Posterior cingulate gyrus (tissue), 11 donors: ENCODE measurements at regions of chr10 and their contacts with region 1.

Region 1: DNA sequence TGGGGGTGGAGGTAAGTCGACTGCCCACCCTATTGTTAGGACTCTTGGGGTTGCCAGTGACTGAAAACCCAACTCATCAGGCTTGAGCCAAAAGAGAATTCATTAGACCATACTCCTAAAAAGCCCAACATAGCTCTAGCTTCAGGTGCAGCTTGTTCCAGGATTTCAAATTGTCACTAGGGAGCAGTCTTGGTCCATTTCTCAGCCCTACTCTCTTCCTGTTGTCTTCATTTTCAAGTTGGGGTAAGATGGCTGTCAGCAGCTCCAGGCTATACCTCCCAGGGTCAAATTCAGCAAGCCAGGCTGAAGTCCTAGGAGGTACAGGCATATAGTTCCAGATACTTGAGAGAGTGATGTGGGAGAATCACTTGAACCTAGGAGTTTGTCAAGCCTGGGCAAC is 14.9 kb upstream of the COL13A1 start:
- DNase-seq: no peak

Region 2: DNA sequence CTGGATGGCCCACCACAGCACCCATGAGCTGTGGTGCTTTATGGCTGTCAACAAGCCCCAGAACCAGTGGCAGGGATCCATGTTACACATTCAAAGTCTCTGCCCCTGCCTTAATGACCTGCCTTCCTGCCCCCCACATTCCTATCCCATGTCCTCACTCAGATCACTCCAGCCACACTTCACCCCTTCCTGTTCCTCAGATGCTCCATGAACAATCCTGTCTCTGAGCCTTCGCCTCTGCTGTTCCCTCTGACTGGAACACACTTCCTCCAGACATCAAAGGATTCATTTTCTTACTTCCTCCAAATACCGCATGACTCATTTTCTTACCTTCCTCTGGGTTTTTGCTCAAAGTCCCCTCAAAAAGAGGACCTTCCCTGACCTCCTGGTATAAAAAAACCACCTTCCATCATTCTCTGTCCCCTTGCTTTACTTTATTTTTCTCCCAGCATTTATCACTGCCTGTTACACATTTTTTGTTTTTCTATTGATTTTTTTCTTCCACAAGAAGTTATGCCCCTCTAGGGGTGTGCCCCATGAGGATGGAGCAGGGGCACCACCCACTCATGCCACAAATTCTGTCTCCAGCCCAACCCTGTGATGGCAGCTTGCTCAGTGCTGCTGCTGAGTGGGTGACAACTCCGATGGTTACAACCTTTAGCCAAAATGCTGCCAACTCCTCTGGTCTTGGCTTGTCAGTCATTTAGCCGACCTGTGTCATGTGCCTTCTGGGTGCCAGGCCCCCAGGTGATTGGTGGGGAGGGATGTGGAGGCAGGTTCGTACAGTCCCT is 33.1 kb after region 1 on chr10:
- intact Hi-C with region 1: no loop called
- DNase-seq: peak in 1 of 10 donors; percentile 41

Region 3: DNA sequence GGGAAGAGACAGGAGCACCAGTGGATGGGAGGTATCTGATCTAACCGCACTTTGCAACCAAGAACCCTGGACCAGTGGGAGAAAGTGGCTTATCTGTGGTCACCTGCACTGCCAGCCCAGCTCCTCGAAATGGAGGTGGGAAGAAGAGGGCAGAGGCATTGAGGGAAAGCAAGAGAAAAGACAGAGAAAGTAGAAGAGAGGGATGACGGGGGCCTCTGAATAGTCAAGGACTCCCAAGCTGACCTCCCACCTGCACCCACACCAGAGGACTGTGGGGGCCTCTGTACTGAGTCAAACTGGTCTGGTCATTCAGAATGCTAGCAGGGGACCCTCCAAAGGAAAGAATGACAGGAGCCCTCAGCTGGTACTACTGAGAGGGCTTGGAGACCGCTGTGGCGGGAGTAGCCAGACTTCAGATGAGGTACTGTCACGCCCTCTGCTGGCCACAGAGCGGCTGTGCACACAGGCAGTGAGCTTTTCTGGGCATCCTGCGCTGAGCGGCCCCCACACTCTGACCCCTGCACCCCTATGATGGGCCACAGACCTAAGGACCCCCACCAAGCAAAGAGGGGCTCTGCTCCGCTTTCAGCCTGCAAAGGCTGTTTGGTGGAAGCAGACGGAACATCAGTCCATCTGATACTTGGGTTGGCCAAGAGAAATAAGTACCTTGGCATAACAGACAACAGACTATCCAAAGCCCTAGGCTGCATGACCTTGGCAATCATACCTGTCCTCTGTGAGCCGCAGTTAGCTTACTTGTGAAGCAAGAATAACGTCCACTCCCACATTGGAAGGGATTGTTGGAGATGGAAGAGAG is 127.8 kb after region 1 on chr10:
- intact Hi-C with region 1: loop called (anchors 2 kb)
- DNase-seq: peak; percentile 50 to 95 (median 83)